GM12878 (cell line): ENCODE measurements at regions of chr9 and their contacts with region 1.

Region 1: DNA sequence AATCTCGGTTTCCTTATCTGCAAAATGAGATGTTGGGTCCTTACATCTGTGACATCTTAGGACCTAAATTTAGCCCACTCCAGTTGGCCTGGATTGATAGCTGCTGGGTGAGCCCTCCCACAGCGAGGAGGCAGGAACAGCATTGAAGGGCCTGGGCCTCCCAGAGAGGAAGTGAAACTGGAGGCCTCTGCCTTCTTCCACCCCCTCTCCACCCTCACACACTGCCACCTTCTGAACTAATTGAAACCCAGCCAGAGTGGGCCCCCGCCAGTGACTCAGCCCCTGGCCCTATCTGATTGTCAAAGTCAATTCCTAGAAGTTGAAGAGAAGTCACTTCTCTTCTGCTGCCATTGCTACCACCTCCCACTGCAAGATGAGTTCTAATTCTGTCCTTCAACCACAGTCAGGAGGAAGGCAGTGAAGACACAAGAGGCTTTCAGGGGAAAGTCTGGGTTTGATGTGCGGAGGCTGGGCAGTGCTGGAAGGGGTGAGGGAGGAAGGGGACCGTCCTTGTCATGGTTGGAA is 55.2 kb upstream of the NEK6 start:
- DNase-seq: peak; percentile 98
- ATAC-seq: peak; percentile 83
- H3K4me3 ChIP-seq: peak overlapping the region; percentile 37; the same call in 1 of the 2 replicates
- H3K27ac ChIP-seq: peak overlapping the region; percentile 99
- H3K4me1 ChIP-seq: peaks cover 77% of the 10 kb centered on the region
- H3K27me3 ChIP-seq: no peaks in the 10 kb centered on the region
- CTCF ChIP-seq: 0 out of 6 replicates have a peak, but pooled peaks of 1 of the 3 experiments have one; percentile 5
- EP300 ChIP-seq: peak; percentile 84 to 98; a peak in 3 of 4 replicates
- POLR2A ChIP-seq: peak; percentile 64; the same call in 1 of the 2 replicates
- RAD21 ChIP-seq: peak; percentile 49

Region 2: DNA sequence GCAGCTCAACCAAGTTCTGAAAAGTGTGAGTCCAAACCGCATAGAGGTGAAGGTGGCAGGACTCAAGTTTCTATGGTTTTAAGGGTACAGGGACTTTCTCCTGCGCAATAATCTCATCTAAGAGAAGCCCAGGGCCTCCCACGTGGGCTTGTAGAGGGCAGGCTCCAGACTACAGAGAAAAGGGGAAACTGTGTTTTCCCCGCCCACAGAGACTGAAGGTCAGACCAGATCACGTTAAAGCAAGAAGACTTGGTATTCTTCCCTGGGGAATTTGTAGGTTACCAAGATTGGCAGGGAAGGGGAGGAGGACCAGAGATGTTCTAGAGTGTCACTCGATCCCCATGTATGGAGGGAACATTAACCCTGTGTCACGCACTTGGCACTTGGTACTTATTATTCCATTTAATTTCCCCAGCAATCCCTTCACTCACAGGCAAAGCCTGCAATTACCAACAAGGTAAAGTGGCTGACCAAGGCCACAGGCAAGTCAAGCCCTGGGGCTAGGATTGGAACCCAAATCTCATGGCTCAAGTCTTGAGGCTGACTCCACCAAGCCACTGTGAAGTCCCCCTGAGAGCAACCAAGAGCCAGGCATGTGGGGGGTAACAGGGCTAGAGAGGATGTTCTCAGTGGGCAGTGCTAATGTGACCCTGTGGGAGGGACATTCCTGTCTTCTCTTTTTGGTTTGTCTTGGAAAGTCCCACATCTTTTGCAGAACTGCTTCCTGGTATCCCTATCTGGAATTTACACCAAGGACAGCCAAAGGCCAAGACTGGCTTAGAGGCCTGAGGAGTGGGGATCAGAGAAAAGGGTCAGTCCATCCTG is 37.0 kb after region 1 on chr9:
- CTCF ChIA-PET with region 1: interaction called, 6 read pairs
- POLR2A ChIA-PET with region 1: interaction called, 10 read pairs
- RAD21 ChIA-PET with region 1: interaction called, 13 read pairs
- SMC1A ChIA-PET with region 1: interaction called, 17 read pairs
- in situ Hi-C with region 1: no loop called
- intact Hi-C with region 1: loop called (anchors 2 kb)
- DNase-seq: peak; percentile 72
- ATAC-seq: peak; percentile 95
- H3K4me3 ChIP-seq: no peak overlapping the region
- H3K27ac ChIP-seq: peak overlapping the region; percentile 89
- H3K4me1 ChIP-seq: peaks cover 39% of the 10 kb centered on the region
- H3K27me3 ChIP-seq: no peaks in the 10 kb centered on the region
- CTCF ChIP-seq: no peak
- EP300 ChIP-seq: peak; percentile 37 to 52; a peak in 2 of 4 replicates
- POLR2A ChIP-seq: no peak
- RAD21 ChIP-seq: no peak

Region 3: GRCh38 chr9:124257844-124258606 is 55.5 kb after region 1 on chr9 and contains the start of gene NEK6:
- CTCF ChIA-PET with region 1: interaction called, 6 read pairs
- POLR2A ChIA-PET with region 1: interaction called, 12 read pairs
- RAD21 ChIA-PET with region 1: interaction called, 16 read pairs
- SMC1A ChIA-PET with region 1: interaction called, 23 read pairs
- in situ Hi-C with region 1: no loop called
- intact Hi-C with region 1: loop called (anchors 1 kb)
- DNase-seq: no peak
- ATAC-seq: peak; percentile 2
- H3K4me3 ChIP-seq: peak within 1 kb of the TSS; percentile 95
- H3K27ac ChIP-seq: peak within 1 kb of the TSS; percentile 88
- H3K4me1 ChIP-seq: peaks cover 35% of the 10 kb centered on the region
- H3K27me3 ChIP-seq: no peaks in the 10 kb centered on the region
- CTCF ChIP-seq: no peak
- EP300 ChIP-seq: no peak
- POLR2A ChIP-seq: peak; percentile 72
- RAD21 ChIP-seq: no peak
- polyA plus RNA-seq, gene NEK6: 31.3 to 33.2 TPM

Region 4: DNA sequence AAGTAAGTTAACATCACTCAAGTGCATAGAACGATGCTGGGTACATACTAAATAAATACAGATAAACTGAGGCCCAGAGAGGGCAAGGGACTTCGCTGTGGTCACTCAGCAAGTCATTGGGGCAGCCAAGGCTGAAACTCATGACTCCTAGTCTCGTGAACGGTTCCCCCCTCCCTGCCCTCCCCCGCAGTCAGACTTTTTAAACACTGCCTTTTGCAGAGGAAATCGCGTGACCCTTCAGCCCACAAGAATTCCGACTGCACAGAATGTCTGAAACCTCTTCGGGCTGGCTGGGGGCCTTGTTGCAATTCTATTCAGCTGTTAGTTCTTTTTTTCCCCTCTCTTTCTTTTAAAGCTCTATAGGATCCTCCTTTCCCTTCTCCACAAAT is 83.4 kb after region 1 on chr9:
- CTCF ChIA-PET with region 1: interaction called, 27 read pairs
- POLR2A ChIA-PET with region 1: interaction called, 14 read pairs
- RAD21 ChIA-PET with region 1: interaction called, 70 read pairs
- SMC1A ChIA-PET with region 1: interaction called, 32 read pairs
- in situ Hi-C with region 1: no loop called
- intact Hi-C with region 1: loop called (anchors 1 kb)
- DNase-seq: peak; percentile 70
- ATAC-seq: peak; percentile 62
- H3K4me3 ChIP-seq: peak overlapping the region; percentile 54
- H3K27ac ChIP-seq: peak overlapping the region; percentile 97
- H3K4me1 ChIP-seq: peaks cover 72% of the 10 kb centered on the region
- H3K27me3 ChIP-seq: no peaks in the 10 kb centered on the region
- CTCF ChIP-seq: no peak
- EP300 ChIP-seq: peak; percentile 77 to 93
- POLR2A ChIP-seq: no peak
- RAD21 ChIP-seq: peak; percentile 17; the same call in 1 of the 2 replicates

Region 5: DNA sequence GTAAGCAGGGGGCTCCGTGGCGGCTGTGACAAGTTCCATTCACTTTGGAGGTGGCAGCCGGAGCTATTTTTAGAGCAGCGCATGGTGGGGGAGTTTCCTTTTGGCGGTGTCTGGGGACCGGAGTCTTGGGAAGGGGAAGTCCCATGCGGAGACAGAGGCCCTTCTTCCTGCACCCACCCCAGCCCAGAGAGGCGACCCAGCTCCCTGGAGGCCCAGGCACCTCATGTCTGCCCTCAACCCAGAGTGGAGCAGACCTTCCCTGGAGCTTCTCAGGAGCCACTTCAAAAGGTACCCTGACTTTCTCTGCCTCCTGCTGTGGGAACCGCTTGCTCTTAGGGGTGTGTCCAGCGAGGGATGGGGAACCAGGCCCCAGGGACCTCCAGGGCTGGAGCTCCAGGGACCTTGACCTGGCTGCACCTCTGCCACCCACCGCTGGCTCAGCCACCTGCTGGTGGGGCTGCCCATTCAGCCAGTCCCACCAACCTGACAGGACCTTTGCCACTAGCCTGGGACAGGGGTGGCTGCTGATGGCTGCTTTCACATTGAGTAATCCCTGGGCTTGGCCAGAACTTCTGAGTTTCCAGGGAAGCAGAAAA is 89.4 kb after region 1 on chr9:
- CTCF ChIA-PET with region 1: interaction called, 27 read pairs
- POLR2A ChIA-PET with region 1: interaction called, 14 read pairs
- RAD21 ChIA-PET with region 1: interaction called, 70 read pairs
- SMC1A ChIA-PET with region 1: interaction called, 32 read pairs
- in situ Hi-C with region 1: no loop called
- intact Hi-C with region 1: no loop called
- DNase-seq: peak; percentile 77
- ATAC-seq: peak; percentile 67
- H3K4me3 ChIP-seq: peak overlapping the region; percentile 56
- H3K27ac ChIP-seq: peak overlapping the region; percentile 91
- H3K4me1 ChIP-seq: peaks cover 90% of the 10 kb centered on the region
- H3K27me3 ChIP-seq: no peaks in the 10 kb centered on the region
- CTCF ChIP-seq: peak; percentile 18 to 41 (median 21); a peak in 3 of 6 replicates
- EP300 ChIP-seq: peak; percentile 45 to 68; a peak in 3 of 4 replicates
- POLR2A ChIP-seq: peak; percentile 45
- RAD21 ChIP-seq: no peak

Region 6: GRCh38 chr9:124302921-124303320 is 100.4 kb after region 1 on chr9:
- CTCF ChIA-PET with region 1: no interaction called
- POLR2A ChIA-PET with region 1: no interaction called
- RAD21 ChIA-PET with region 1: no interaction called
- SMC1A ChIA-PET with region 1: no interaction called
- in situ Hi-C with region 1: no loop called
- intact Hi-C with region 1: no loop called
- DNase-seq: no peak
- ATAC-seq: no peak
- H3K4me3 ChIP-seq: no peak overlapping the region
- H3K27ac ChIP-seq: no peak overlapping the region
- H3K4me1 ChIP-seq: peaks cover 16% of the 10 kb centered on the region
- H3K27me3 ChIP-seq: no peaks in the 10 kb centered on the region
- CTCF ChIP-seq: no peak
- EP300 ChIP-seq: no peak
- POLR2A ChIP-seq: no peak
- RAD21 ChIP-seq: no peak